Dorsolateral prefrontal cortex (tissue), 120 donors: ENCODE measurements at regions of chr11 and their contacts with region 1.

Region 1: DNA sequence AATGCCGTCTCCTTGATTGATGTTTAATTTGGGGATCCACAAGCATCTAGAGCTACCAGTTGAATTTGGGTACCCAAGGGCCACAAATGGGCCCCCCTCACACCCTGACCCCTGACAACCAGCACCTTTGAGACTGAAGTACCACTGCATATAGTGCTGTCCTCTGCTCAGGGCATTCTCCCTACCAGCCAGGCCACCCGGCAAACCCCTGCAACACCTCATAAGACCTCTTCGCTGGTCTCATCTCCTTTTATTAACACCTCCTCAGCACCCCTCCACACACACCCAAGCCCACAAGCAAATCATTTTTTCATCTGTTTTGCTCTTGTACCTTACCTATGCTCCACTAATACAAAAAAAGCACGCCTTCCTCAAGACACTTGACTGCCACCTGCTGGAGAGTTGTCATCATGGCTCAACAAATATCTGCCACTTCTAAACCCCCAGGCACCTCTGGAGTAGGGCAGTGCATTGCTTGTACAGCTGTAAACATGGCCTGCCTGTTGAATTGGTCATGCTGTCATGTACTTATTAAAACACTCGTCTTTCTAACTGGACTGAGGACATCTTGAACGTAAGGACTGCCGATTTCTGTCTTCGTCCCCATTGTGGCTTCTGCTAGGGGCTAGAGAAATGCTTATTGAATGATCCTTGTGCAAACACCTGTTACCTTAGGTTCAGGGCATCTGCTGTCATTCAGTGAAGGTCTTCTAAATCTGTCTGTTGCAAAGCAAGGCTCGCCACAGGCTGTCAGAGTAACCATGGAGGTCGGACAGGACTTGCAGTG is 66.5 kb downstream of the BMAL1 start:
- DNase-seq: peak in 6 of 10 donors; percentile 54 to 73 (median 59)
- H3K4me3 ChIP-seq: no peak overlapping the region
- H3K27ac ChIP-seq: no peak overlapping the region
- H3K27me3 ChIP-seq: no peaks in the 10 kb centered on the region
- CTCF ChIP-seq: peak; percentile 67 to 91 (median 82)

Region 2: DNA sequence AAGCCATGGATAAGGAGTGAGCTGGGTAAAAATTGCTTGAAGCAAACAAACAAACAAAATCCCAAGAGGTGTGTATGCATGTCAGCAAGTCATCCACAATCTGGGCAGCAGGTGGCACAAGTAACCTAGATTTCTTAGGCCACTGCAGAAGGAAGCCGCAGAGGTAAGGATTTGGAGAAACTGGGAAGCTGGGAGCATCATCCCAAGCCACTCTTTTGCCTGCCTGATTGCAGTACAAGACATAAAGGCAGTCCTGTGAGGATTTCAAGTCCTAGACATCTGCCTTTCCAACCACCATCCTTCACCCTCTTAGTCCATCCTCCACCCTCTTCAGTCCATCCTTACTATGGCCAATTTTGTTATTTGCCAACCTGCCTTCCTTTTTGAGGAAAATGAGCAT is 133.7 kb before region 1 on chr11:
- intact Hi-C with region 1: loop called (anchors 2 to 10 kb)
- DNase-seq: peak in 9 of 10 donors; percentile 53 to 84 (median 67)
- H3K4me3 ChIP-seq: no peak overlapping the region
- H3K27ac ChIP-seq: peak overlapping the region in 6 of 59 donors; percentile 4 to 60 (median 18)
- H3K27me3 ChIP-seq: no peaks in the 10 kb centered on the region
- CTCF ChIP-seq: peak; percentile 25 to 79 (median 63)

Region 3: GRCh38 chr11:13261591-13262061 is 82.5 kb before region 1 on chr11:
- intact Hi-C with region 1: no loop called
- DNase-seq: no peak
- H3K4me3 ChIP-seq: no peak overlapping the region
- H3K27ac ChIP-seq: peak overlapping the region in 6 of 59 donors; percentile 3 to 68 (median 22)
- H3K27me3 ChIP-seq: peaks cover 0 to 5% (median 0%) of the 10 kb centered on the region in 45 donors
- CTCF ChIP-seq: no peak